ENCODE measurements at regions of chrX and their contacts with region 1.

Region 1: GRCh38 chrX:110442640-110443039 is 84.0 kb downstream of the RTL9 start:
- DNase-seq: peak; percentile 56
- H3K4me3 ChIP-seq: no peak overlapping the region
- H3K27ac ChIP-seq: no peak overlapping the region
- H3K4me1 ChIP-seq: no peaks in the 10 kb centered on the region
- H3K27me3 ChIP-seq: no peaks in the 10 kb centered on the region

Region 2: DNA sequence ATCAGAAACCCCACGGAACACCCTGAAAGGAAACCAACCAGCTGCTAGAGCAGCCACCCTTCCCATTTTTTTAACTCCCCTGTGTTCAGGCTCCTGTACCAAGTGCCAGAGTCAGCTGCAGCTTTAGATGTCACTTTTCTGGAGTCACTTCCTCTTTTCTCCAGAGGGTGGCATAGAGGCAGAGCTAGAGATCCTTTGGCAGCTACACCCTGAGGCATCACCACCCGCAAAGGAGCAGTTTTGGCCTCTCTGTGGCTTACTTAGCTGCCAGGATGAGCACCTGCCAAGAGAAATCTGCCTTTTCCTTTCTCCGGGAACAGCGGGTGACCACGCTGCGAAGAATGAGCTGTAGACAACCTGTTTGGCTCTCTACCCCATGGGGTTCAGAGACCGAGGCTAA is 411.0 kb after region 1 on chrX:
- in situ Hi-C with region 1: loop called (anchors 10 kb)
- DNase-seq: peak; percentile 53
- H3K4me3 ChIP-seq: no peak overlapping the region
- H3K27ac ChIP-seq: no peak overlapping the region
- H3K4me1 ChIP-seq: peaks cover 5% of the 10 kb centered on the region; the same call in 1 of the 2 replicates
- H3K27me3 ChIP-seq: no peaks in the 10 kb centered on the region

Region 3: DNA sequence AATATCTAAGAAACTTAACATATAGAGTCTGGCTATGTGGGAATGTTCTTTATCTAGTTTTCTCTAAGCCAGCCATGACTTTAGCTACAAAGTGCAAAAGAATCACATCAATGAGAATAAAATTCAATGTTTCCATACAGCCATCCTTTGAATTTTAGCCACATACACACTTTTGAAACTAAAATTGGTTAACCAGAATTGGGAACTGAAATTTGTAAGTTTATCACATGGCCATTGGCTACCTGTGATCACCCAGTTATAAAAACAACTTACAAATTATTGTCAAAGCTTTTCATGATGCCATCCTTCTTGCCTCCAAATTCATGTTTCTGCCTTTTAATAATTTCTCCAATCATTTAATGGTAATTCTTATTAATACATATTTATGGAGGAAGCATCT is 703.2 kb after region 1 on chrX:
- in situ Hi-C with region 1: no loop called
- DNase-seq: no peak
- H3K4me3 ChIP-seq: no peak overlapping the region
- H3K27ac ChIP-seq: no peak overlapping the region
- H3K4me1 ChIP-seq: no peaks in the 10 kb centered on the region
- H3K27me3 ChIP-seq: no peaks in the 10 kb centered on the region

Measured in GM23248 (cell line).